ENCODE measurements at regions of chr17 and their contacts with region 1.

Region 1: DNA sequence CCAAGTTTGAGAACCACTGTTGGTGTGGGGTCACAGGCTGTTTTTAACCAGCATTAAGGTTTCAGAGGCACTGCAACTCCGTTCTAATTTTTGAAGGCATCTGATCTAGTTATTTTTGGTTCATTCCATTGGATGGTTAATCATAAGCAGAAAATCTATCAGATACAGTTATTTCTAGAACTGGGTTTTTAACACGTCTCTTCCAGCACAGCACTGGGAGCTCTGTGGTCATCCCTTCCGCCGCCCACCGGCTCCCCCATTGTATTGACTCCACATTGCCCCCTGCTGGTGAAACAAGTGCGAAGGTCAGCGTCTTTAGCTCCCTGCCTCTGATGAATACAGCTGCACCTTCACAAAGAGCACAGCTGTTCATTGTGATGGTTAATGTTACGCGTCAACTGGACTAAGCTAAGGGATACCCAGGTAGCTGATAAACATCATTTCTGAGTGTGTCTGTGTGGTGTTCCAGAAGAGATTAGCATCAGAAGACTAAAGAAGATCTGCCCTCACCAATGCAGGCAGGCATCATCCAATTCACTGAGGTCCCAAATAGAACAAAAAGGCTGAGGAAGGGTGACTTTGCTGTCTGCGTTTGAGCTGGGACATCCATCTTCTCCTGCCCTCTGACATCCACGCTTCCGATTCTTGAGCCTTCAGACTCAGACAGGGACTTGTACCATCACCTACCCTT is 8.5 kb downstream of the CCL18 start:
- DNase-seq: peak; percentile 83
- ATAC-seq: peak; percentile 92
- H3K4me3 Mint-ChIP-seq: no peak overlapping the region
- H3K27ac Mint-ChIP-seq: no peak overlapping the region
- H3K4me1 Mint-ChIP-seq: peaks cover 5% of the 10 kb centered on the region
- H3K27me3 Mint-ChIP-seq: no peaks in the 10 kb centered on the region
- CTCF ChIP-seq: peak; percentile 63

Region 2: DNA sequence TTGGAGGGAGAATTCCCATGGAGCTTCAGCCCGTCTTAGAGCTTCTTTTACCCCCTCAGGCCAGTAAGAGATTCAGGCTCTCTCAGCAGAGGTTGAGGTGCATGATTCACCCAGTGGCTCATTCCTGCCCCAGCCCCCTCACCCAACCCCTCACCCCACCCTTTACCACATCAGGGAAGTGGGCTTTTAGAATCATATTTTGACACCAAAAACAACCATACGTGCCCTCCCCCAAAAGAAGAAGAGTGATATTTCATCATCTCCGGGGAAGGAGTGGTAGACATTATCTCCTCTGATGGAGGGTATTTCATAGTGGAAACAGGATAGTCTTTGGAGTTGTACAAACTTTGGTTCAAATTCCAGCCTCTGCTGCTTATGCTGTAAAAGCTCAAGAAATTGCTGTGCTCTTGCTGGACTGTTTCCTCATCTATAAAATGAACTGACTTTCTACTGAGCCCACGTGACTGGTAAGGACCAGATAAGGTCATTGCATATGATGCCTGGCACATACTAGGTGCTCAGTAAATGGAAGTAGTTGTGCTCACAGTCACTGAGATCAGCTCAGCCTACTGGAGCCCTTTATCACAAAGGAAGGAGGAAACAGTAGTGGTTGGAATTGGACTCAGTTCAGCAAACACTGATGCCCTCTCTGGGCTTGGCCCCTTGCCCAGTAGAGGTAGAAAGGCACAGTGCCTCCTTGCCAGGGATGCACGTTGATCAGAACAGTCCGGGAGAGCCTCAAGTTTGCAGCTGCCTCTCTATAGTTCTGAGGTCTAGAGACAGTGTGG is 174.1 kb before region 1 on chr17:
- CTCF ChIA-PET with region 1: no interaction called
- POLR2A ChIA-PET with region 1: no interaction called
- DNase-seq: no peak
- ATAC-seq: no peak
- H3K4me3 Mint-ChIP-seq: no peak overlapping the region
- H3K27ac Mint-ChIP-seq: no peak overlapping the region
- H3K4me1 Mint-ChIP-seq: no peaks in the 10 kb centered on the region
- H3K27me3 Mint-ChIP-seq: no peaks in the 10 kb centered on the region; the same call in 1 of the 2 replicates
- CTCF ChIP-seq: no peak

Region 3: DNA sequence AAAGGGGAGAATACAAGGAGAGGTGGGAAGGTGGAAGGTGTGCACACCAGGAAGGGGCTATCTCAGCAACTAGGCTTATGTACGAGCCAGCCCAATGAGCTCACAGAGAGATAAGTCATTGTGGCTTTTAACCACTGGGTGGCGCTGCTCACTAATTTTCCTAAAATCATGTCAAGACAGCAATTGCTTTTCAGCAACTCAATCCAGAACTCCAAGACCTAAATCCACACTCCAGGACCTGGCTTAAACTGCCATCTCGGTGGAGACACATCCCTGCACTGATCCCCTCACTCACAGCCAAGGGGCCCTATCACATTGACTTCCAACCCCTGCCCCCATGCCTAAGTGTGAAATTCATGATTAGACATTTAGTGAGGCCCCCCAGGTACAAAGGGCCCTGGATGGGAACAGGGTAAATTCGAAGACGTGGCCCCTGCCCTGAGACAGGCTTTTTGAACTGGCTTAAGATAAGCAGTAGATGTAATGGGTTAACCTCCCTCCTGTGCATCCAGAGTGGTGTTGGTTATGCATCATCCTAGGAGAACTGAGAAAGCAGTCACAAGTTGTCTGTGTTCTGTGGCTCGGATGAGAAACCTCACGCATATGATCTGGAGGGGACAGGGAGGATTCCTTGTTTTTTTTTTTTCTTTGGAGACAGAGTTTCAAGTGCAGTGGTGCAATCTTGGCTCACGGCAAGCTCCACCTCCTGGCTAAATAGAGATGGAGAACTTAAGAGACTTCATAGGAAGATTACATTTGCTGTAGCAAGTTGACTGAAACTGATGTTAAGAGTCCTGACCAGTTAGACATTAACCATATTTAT is 102.8 kb before region 1 on chr17:
- CTCF ChIA-PET with region 1: interaction called, 159 read pairs
- POLR2A ChIA-PET with region 1: no interaction called
- DNase-seq: peak; percentile 88
- ATAC-seq: peak; percentile 92
- H3K4me3 Mint-ChIP-seq: no peak overlapping the region
- H3K27ac Mint-ChIP-seq: no peak overlapping the region
- H3K4me1 Mint-ChIP-seq: no peaks in the 10 kb centered on the region
- H3K27me3 Mint-ChIP-seq: peaks cover 3% of the 10 kb centered on the region; the same call in 1 of the 2 replicates
- CTCF ChIP-seq: peak; percentile 82

Region 4: GRCh38 chr17:36008998-36009665 is 63.4 kb before region 1 on chr17:
- CTCF ChIA-PET with region 1: interaction called, 11 read pairs
- POLR2A ChIA-PET with region 1: no interaction called
- DNase-seq: peak; percentile 39
- ATAC-seq: peak; percentile 55
- H3K4me3 Mint-ChIP-seq: no peak overlapping the region
- H3K27ac Mint-ChIP-seq: no peak overlapping the region
- H3K4me1 Mint-ChIP-seq: no peaks in the 10 kb centered on the region
- H3K27me3 Mint-ChIP-seq: no peaks in the 10 kb centered on the region
- CTCF ChIP-seq: peak; percentile 56

Region 5: GRCh38 chr17:36055921-36056520 is 16.6 kb before region 1 on chr17:
- CTCF ChIA-PET with region 1: interaction called, 15 read pairs
- POLR2A ChIA-PET with region 1: no interaction called
- DNase-seq: no peak
- ATAC-seq: no peak
- H3K4me3 Mint-ChIP-seq: no peak overlapping the region
- H3K27ac Mint-ChIP-seq: no peak overlapping the region
- H3K4me1 Mint-ChIP-seq: no peaks in the 10 kb centered on the region
- H3K27me3 Mint-ChIP-seq: no peaks in the 10 kb centered on the region; the same call in 1 of the 2 replicates
- CTCF ChIP-seq: no peak

Region 6: DNA sequence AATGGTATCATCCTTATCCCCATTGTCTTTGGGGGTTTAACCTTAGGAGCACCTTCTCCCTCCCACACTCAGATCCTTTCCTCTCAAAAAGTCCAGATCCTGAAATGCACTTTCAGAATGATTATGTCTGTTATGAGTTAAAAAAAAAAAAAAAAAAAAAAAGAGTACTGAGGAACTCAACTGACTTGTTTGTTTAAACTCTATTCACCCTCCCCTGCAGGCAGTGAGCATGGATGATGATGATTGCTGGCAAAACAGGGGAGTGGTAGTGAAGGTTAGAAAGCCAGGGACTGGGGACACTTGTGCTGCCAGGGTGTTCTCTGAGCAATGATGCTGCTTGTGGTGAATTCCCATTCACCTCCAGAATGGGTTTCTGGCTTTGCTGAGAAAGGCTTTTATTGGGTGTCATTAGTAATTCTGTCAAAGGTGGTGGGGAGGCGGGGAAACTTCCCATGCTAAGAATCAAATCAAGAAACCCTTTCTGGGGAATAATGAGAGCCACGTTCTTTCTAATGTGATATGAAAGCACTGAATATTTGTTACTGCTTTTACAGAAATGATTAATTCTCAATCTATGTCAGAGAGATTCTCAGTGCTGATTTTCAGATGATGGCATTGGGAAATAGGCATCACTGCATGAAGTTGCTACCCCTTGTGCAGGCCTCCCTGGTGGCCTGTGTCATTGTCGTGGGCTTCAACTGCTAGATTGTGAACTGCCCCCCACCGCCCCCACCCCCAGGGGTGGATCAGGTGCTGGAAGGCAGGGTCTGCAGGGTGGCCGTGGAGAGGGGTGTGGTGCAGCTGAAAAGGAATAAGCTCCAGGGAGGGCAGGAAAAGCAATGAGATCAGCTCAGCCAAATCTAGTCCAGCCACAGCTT is 45.2 kb after region 1 on chr17:
- CTCF ChIA-PET with region 1: interaction called, 12 read pairs
- POLR2A ChIA-PET with region 1: no interaction called
- DNase-seq: no peak
- ATAC-seq: no peak
- H3K4me3 Mint-ChIP-seq: no peak overlapping the region
- H3K27ac Mint-ChIP-seq: no peak overlapping the region
- H3K4me1 Mint-ChIP-seq: peaks cover 7% of the 10 kb centered on the region
- H3K27me3 Mint-ChIP-seq: peaks cover 27% of the 10 kb centered on the region
- CTCF ChIP-seq: no peak

Region 7: DNA sequence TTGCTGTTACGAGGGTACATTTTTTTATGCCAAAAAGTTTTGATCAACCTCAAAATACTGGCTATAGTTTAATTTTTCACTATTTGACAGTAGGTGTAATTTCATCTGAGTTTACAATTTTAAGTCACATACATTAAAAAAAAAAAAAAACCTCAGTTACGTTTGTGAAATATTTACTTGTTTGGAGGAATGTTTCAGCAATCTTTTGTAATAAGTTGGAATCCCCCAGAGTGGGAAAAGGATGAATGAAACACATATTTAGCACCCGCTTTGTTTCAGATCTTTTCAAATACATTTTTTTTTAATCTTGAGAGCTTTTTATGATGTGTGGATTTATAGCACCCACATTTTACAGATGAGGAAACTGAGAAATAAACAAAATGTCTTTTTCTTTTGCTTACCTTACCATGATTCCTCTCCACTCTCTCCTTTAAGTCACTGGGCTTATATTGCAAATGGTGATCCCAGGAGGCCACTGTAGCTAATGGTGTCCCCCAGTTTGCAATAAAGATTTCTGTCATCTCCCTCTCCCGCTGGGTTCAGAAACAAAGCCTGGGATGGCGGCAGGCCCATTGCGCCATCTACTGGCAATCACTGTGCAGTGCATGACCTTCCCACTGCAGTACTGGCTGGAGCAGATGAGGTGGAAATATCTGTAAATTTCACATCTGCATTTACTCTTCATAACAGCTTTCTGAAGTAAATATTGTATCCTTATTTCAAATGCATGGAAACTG is 76.2 kb after region 1 on chr17:
- CTCF ChIA-PET with region 1: interaction called, 49 read pairs
- POLR2A ChIA-PET with region 1: no interaction called
- DNase-seq: peak; percentile 66
- ATAC-seq: peak; percentile 90
- H3K4me3 Mint-ChIP-seq: no peak overlapping the region
- H3K27ac Mint-ChIP-seq: no peak overlapping the region
- H3K4me1 Mint-ChIP-seq: peaks cover 9% of the 10 kb centered on the region
- H3K27me3 Mint-ChIP-seq: no peaks in the 10 kb centered on the region; the same call in 1 of the 2 replicates
- CTCF ChIP-seq: peak; percentile 97

Region 8: GRCh38 chr17:36183001-36183971 is 110.7 kb after region 1 on chr17:
- CTCF ChIA-PET with region 1: no interaction called
- POLR2A ChIA-PET with region 1: no interaction called
- DNase-seq: peak; percentile 82
- ATAC-seq: peak; percentile 80
- H3K4me3 Mint-ChIP-seq: peak overlapping the region; percentile 72
- H3K27ac Mint-ChIP-seq: no peak overlapping the region
- H3K4me1 Mint-ChIP-seq: peaks cover 5% of the 10 kb centered on the region; the same call in 1 of the 2 replicates
- H3K27me3 Mint-ChIP-seq: peaks cover 32% of the 10 kb centered on the region
- CTCF ChIP-seq: no peak

Measured in WTC11 (cell line).